ENCODE measurements at regions of chr12 and their contacts with region 1.

Region 1: GRCh38 chr12:108803428-108804105 is 53.8 kb downstream of the SSH1 start:
- DNase-seq: no peak
- H3K4me3 ChIP-seq: no peak overlapping the region
- H3K27ac ChIP-seq: peak overlapping the region; percentile 69 to 97 (median 85)
- H3K4me1 ChIP-seq: peaks cover 14 to 66% (median 50%) of the 10 kb centered on the region in 3 donors
- H3K27me3 ChIP-seq: no peaks in the 10 kb centered on the region
- CTCF ChIP-seq: peak; percentile 80 to 97 (median 95)
- POLR2A ChIP-seq: no peak

Region 2: DNA sequence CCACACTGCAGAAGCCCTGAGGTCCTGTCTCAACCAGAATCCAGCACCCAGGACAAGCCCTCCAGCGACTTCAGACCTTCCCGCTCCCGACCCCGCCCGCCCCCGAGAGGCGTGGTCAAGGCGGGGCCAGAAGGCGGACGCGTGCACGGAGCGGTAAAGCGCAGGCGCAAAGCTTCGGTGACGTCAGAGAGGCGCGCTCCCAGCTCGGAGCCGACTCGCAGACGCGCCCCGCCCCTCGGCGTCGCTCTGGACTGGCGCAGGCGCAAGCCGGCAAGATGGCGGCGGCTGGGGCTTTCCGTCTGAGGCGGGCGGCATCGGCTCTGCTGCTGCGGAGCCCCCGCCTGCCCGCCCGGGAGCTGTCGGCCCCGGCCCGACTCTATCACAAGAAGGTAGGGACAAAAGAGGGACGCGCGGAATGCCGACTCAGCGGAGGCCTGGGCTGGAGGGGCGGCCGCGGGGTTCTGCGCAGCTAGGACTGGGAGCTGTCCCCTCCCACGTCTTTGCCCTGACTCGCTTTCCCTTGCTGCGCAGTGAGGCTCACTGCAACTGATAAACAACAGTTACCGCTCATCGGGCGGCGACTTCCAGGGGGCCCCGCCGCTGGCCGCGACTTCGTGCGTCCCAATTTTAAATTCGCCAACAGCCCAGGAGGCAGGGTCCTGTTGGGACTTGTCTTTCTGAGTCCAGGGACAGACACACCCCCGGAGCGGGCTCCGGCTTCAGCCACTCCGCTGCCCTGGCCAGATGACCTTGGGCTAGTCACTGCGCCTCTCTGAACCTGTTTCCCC is 241.0 kb before region 1 on chr12 and contains the start of gene ISCU:
- intact Hi-C with region 1: loop called (anchors 10 kb)
- DNase-seq: peak; percentile 75
- H3K4me3 ChIP-seq: peak within 1 kb of the TSS; percentile 82 to 94 (median 93)
- H3K27ac ChIP-seq: peak within 1 kb of the TSS; percentile 95 to 98 (median 96)
- H3K4me1 ChIP-seq: peaks cover 28 to 81% (median 40%) of the 10 kb centered on the region in 3 donors
- H3K27me3 ChIP-seq: no peaks in the 10 kb centered on the region
- CTCF ChIP-seq: no peak
- POLR2A ChIP-seq: peak in 2 of 4 donors; percentile 94 to 99
- total RNA-seq, gene ISCU: 50.7 to 132 (median 85.3) TPM

Region 3: GRCh38 chr12:108664338-108665258 is 139.0 kb before region 1 on chr12:
- intact Hi-C with region 1: loop called (anchors 5 kb)
- DNase-seq: peak; percentile 57
- H3K4me3 ChIP-seq: peak overlapping the region in 1 of 4 donors; percentile 34
- H3K27ac ChIP-seq: peak overlapping the region; percentile 74 to 93 (median 90)
- H3K4me1 ChIP-seq: peaks cover 29 to 69% (median 53%) of the 10 kb centered on the region in 3 donors
- H3K27me3 ChIP-seq: no peaks in the 10 kb centered on the region
- CTCF ChIP-seq: peak; percentile 83 to 98 (median 93)
- POLR2A ChIP-seq: no peak

Region 4: DNA sequence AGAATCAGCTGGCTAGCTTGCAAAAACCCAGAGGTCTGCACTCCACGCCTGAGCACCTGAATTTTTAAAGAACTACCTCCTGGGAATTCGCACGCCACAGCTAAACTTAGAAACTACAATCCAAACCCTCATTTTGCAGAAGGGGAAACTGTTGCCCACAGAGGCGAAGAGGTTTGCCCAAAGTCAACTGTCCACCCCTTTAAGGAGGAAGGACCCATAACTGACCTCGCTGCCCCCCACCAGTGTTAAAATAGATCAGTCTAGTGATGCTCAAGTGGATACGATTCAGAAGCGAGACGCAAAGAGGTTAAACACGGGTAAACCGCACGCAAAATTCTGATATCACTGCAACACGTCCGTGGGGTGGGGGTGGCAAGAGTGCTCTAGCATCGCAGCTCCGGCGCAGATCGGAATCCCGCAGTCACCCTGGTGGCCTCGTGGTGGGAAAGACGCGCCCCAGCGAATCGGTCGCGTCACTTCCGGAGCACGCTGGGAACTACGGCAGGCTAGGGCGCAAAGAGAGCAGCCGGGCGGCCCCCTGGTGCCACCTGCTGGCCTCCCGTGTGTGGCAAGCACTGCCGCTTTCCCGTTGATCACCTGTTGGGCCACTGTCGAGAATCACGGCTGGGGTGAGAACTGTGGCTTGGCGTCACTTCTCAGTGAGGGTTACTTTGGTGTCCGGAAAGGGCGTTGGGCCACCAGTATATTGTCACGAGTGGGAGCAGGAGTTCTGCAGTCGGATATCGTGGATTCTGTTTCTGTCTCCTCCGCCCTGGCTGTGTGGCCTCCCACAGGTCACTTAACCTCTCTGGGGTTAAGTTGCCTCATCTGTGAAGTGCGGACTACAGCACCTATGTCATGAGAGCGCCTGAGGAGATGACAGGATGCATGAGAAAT is 289.7 kb after region 1 on chr12 and contains the start of gene ALKBH2:
- intact Hi-C with region 1: loop called (anchors 10 kb)
- DNase-seq: peak; percentile 69
- H3K4me3 ChIP-seq: peak within 1 kb of the TSS; percentile 41 to 70 (median 54)
- H3K27ac ChIP-seq: peak within 1 kb of the TSS; percentile 73 to 83 (median 77)
- H3K4me1 ChIP-seq: peaks cover 23 to 47% (median 33%) of the 10 kb centered on the region in 3 donors
- H3K27me3 ChIP-seq: no peaks in the 10 kb centered on the region
- CTCF ChIP-seq: peak; percentile 97 to 99 (median 99)
- POLR2A ChIP-seq: peak in 1 of 4 donors; percentile 49
- total RNA-seq, gene ALKBH2: 7.9 to 20.6 (median 14.8) TPM

Measured in esophagus squamous epithelium (tissue), 5 donors.